ENCODE measurements at regions of chr16 and their contacts with region 1.

Region 1: GRCh38 chr16:85321509-85322271 is 209.4 kb upstream of the CIBAR2 start:
- DNase-seq: peak; percentile 91 to 99
- H3K4me3 ChIP-seq: peak overlapping the region in 1 of 2 donors; percentile 16
- H3K27ac ChIP-seq: peak overlapping the region; percentile 89 to 92
- H3K4me1 ChIP-seq: peaks cover 21 to 42% of the 10 kb centered on the region in 2 donors
- H3K27me3 ChIP-seq: no peaks in the 10 kb centered on the region
- CTCF ChIP-seq: no peak

Region 2: GRCh38 chr16:85305996-85306792 is 15.5 kb before region 1 on chr16:
- intact Hi-C with region 1: loop called (anchors 1 kb)
- DNase-seq: peak; percentile 87 to 96
- H3K4me3 ChIP-seq: no peak overlapping the region
- H3K27ac ChIP-seq: peak overlapping the region; percentile 27 to 49
- H3K4me1 ChIP-seq: peaks cover 3 to 29% of the 10 kb centered on the region in 2 donors
- H3K27me3 ChIP-seq: no peaks in the 10 kb centered on the region
- CTCF ChIP-seq: no peak

Region 3: GRCh38 chr16:85334718-85335583 is 13.3 kb after region 1 on chr16:
- intact Hi-C with region 1: no loop called
- DNase-seq: no peak
- H3K4me3 ChIP-seq: no peak overlapping the region
- H3K27ac ChIP-seq: no peak overlapping the region
- H3K4me1 ChIP-seq: peaks cover 0 to 11% of the 10 kb centered on the region in 2 donors
- H3K27me3 ChIP-seq: no peaks in the 10 kb centered on the region
- CTCF ChIP-seq: no peak

Region 4: DNA sequence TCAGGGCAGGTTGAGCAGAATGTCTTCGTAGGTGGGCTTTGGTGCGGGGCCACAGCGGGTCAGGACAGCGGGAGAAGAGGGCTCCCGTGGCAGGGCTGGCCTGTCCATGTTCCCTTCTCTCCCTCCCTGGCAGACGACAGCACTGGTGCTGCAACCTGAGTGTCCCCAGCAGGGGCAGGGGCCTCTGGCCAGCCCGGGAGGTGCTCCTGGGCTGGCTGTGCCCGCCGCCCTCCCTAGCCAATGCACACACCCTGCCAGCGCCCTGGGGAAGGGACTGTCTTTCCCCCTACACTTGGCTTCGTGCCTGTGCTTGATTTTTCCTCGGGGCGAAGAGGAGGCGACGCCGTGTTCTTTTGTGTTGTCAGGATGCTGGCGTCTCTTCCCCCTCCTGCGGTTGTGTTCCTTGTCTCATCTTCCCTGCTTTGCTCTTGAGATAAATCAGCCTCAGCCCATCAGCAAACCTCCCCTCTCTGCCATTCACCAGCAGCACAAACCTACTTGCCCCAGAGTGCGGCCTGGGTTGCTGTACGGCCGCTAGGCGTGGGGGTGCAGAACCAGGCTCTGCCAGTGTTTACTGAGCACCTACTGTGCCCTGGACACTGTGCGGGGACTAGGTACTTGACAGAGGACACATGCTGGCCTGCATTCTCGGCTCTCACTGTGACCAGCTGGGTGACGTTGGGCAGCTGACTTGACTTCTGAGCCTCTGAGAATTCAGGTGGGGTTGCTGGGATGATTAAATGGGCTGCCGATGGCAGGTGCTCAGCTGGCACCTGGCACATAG is 27.9 kb after region 1 on chr16:
- intact Hi-C with region 1: loop called (anchors 2 kb)
- DNase-seq: no peak
- H3K4me3 ChIP-seq: no peak overlapping the region
- H3K27ac ChIP-seq: no peak overlapping the region
- H3K4me1 ChIP-seq: peaks cover 2 to 7% of the 10 kb centered on the region in 2 donors
- H3K27me3 ChIP-seq: no peaks in the 10 kb centered on the region
- CTCF ChIP-seq: no peak

Region 5: GRCh38 chr16:85393674-85394483 is 72.2 kb after region 1 on chr16:
- intact Hi-C with region 1: loop called (anchors 2 kb)
- DNase-seq: peak in 1 of 2 donors; percentile 67
- H3K4me3 ChIP-seq: no peak overlapping the region
- H3K27ac ChIP-seq: peak overlapping the region in 1 of 2 donors; percentile 9
- H3K4me1 ChIP-seq: peaks cover 17 to 26% of the 10 kb centered on the region in 2 donors
- H3K27me3 ChIP-seq: no peaks in the 10 kb centered on the region
- CTCF ChIP-seq: peak; percentile 63 to 69 (median 67)

Region 6: GRCh38 chr16:85437166-85438055 is 115.7 kb after region 1 on chr16:
- intact Hi-C with region 1: no loop called
- DNase-seq: no peak
- H3K4me3 ChIP-seq: peak overlapping the region; percentile 30 to 49
- H3K27ac ChIP-seq: peak overlapping the region; percentile 71 to 86
- H3K4me1 ChIP-seq: peaks cover 9 to 20% of the 10 kb centered on the region in 2 donors
- H3K27me3 ChIP-seq: no peaks in the 10 kb centered on the region
- CTCF ChIP-seq: no peak

Region 7: DNA sequence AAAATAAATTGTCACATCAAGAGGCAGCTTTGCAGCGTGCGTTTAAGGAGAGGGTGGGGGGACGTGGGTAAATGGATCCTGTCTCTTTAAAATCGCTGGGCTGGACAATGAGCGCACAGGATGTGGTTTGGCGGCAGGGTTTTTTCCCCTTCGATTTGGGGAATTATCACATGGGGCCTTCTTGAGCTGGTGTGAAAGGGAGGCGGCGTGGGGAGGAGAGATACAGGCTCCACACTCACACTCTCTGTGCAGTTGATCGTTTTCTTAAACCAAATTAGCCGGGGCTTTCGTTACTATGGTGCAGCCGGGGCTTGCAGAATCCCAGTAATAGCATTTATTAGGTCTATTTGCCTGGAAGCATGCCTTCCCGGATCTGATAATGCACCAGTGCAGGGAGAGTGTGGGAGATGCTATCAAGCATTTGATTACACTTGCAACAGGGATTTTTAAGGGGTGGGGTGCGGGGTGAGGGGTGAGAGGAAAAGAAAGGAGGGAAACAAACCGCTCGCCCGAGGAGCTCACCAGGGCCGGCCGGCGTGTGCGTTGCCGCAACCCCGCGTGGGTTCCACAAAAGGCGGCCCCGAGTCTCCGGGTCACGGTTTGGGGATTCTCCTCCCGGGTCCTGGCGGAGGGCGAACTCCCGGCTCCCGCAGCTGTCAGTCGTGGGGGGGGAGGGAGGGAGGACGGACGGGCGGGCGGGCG is 232.6 kb after region 1 on chr16:
- intact Hi-C with region 1: loop called (anchors 2 kb)
- DNase-seq: peak; percentile 54 to 86
- H3K4me3 ChIP-seq: peak overlapping the region; percentile 76 to 96
- H3K27ac ChIP-seq: peak overlapping the region; percentile 72 to 89
- H3K4me1 ChIP-seq: peaks cover 0 to 16% of the 10 kb centered on the region in 2 donors
- H3K27me3 ChIP-seq: no peaks in the 10 kb centered on the region
- CTCF ChIP-seq: no peak

Region 8: DNA sequence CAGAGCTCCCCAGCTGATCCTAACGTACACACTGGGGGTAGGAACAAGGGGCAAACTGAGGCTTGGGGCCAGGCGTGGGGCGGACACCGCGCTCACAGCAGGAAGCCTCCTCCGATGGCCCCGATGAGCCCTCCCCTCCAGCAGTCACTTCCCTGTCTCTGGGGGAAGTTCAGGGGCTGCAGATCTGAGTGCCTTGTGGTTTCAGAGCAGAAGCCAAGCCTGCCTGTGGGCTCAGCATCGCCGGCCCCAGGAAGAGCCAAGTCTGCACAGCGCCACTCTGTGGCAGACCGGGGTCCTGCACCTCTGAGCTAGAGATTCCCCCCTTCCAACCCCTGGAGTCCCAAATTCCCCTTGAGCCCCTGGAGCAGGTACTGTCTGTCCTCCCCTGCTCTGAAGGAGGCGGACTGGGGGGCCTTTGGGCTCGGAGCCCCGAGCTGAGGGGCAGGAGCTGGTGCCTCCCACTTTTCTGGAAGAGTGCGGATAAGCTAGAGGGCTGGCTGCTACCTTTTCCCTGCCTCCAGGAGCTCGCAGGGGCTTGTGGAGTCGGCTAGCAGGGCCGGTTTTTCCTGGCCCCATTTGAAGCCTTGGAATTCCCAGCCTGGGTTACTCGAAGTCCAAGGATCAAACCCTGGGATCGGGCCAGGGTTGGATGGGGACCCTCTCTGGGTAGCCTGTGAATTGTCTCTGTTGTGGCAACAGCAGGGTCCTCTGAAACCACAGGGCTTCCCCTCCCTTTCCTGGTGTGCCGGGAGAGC is 294.3 kb after region 1 on chr16:
- intact Hi-C with region 1: loop called (anchors 1 kb)
- DNase-seq: peak; percentile 42 to 90
- H3K4me3 ChIP-seq: peak overlapping the region in 1 of 2 donors; percentile 23
- H3K27ac ChIP-seq: peak overlapping the region; percentile 91 to 92
- H3K4me1 ChIP-seq: peaks cover 8 to 30% of the 10 kb centered on the region in 2 donors
- H3K27me3 ChIP-seq: no peaks in the 10 kb centered on the region
- CTCF ChIP-seq: peak; percentile 85 to 94 (median 90)